ENCODE measurements at regions of chr1 and their contacts with region 1.

Region 1: DNA sequence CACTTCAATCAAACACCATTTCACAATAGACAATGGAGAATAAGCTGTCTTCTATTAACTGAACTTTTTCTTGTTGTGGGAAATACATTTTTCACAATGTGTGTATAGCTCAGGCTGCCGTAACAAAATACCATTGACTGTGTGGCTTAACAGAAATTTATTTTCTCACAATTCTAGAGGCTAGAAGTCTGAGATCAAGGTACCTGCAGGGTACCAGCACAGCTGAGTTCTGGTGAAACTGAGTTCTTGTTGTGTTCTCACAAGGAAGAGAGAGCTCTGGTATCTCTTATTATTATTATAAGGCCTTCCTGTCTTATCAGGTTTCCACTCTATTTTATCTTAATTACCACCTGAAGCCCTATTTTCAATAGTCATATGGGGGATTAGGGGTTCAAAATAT is 15.4 kb downstream of the ST7L start:
- DNase-seq: no peak
- H3K4me3 ChIP-seq: no peak overlapping the region
- H3K27ac ChIP-seq: peak overlapping the region in 3 of 4 donors; percentile 17 to 91 (median 25)
- H3K4me1 ChIP-seq: peaks cover 0 to 26% (median 4%) of the 10 kb centered on the region in 3 donors
- H3K27me3 ChIP-seq: no peaks in the 10 kb centered on the region
- CTCF ChIP-seq: no peak
- POLR2A ChIP-seq: no peak

Region 2: DNA sequence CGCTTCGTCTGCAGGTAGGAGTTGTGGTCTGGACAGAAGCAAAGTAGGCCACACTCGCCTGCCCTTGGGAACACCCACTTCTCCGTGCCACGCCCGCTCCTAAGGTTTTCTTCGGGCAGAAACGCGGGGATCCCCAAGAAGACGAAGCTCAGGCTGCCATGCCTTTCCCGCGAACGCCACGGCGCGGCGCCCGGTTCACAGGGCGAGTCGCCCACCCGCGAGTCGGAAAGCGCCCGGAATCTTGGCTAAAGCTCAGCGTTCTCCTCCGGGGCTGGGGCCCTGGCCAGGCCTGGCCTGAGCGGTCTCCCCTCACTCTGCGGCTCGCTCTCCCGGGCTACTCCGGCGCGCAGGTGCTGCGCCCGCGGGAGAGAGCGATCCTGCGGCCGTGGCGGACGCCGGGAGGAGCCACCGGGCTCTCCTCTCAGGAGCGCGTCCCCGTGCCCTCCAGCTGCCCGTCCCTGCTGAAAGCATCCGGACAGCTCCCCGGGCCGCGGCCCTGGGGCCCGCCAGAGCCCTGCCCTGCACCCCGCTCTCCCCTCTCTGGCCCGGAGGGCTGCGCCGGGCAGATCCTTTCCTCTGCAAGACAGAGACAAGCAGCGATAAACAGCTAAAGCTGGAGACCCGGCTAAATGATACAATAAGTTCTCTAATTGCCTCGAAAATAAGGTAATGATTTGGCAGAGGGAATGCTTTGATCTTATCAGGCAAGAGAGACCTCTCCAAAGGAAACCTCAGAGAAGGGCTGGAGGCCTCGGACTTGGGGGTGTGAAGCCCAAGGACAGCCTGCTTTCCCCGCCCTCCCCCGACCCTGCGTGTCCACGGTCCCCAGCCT is 101.5 kb before region 1 on chr1:
- intact Hi-C with region 1: no loop called
- DNase-seq: no peak
- H3K4me3 ChIP-seq: peak overlapping the region; percentile 55 to 74 (median 65)
- H3K27ac ChIP-seq: peak overlapping the region in 3 of 4 donors; percentile 66 to 76 (median 68)
- H3K4me1 ChIP-seq: peaks cover 7 to 22% (median 18%) of the 10 kb centered on the region in 3 donors
- H3K27me3 ChIP-seq: peaks cover 0 to 30% (median 0%) of the 10 kb centered on the region in 4 donors
- CTCF ChIP-seq: peak; percentile 55 to 86 (median 73)
- POLR2A ChIP-seq: no peak

Region 3: DNA sequence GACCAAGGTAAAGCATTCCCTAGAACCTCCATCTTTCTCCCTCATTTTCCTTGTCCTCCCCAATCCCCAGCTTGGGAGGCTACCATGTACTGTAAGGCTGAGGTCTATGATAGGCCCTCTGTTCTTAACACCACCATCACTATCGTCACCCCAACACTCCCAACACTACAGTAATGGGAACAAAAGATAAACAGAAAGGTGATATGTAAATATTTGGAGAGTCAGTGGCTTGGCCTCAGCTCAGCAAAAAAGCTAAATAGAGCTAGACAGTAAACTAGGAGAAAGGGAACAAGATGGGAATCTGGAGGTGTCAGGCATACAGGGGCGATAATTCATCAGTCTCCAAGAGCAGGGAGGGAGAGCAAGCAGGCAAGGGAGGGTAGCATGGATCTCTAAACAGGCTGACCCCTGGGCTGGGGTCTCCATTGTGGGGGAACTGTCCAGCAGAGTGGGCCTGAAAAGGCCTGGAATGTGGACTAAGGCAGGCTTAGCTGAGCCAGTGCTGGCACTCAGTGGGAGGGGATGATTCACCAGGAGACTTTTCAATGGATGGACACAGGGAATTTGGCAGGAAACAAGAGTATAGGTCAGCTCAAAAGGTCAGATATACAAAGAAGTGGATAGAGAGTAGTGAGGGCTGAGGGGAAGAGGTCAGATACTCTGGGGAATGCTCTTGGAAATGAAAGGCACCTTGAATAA is 88.1 kb before region 1 on chr1:
- intact Hi-C with region 1: loop called (anchors 5 kb)
- DNase-seq: no peak
- H3K4me3 ChIP-seq: no peak overlapping the region
- H3K27ac ChIP-seq: no peak overlapping the region
- H3K4me1 ChIP-seq: peaks cover 12 to 63% (median 25%) of the 10 kb centered on the region in 3 donors
- H3K27me3 ChIP-seq: no peaks in the 10 kb centered on the region
- CTCF ChIP-seq: no peak
- POLR2A ChIP-seq: no peak

Region 4: GRCh38 chr1:112735752-112736151 is 132.2 kb after region 1 on chr1:
- intact Hi-C with region 1: no loop called
- DNase-seq: no peak
- H3K4me3 ChIP-seq: no peak overlapping the region
- H3K27ac ChIP-seq: no peak overlapping the region
- H3K4me1 ChIP-seq: peaks cover 0 to 8% (median 0%) of the 10 kb centered on the region in 3 donors
- H3K27me3 ChIP-seq: peaks cover 0 to 5% (median 0%) of the 10 kb centered on the region in 4 donors
- CTCF ChIP-seq: no peak
- POLR2A ChIP-seq: no peak